ENCODE measurements at regions of chr3 and their contacts with region 1.

Region 1: DNA sequence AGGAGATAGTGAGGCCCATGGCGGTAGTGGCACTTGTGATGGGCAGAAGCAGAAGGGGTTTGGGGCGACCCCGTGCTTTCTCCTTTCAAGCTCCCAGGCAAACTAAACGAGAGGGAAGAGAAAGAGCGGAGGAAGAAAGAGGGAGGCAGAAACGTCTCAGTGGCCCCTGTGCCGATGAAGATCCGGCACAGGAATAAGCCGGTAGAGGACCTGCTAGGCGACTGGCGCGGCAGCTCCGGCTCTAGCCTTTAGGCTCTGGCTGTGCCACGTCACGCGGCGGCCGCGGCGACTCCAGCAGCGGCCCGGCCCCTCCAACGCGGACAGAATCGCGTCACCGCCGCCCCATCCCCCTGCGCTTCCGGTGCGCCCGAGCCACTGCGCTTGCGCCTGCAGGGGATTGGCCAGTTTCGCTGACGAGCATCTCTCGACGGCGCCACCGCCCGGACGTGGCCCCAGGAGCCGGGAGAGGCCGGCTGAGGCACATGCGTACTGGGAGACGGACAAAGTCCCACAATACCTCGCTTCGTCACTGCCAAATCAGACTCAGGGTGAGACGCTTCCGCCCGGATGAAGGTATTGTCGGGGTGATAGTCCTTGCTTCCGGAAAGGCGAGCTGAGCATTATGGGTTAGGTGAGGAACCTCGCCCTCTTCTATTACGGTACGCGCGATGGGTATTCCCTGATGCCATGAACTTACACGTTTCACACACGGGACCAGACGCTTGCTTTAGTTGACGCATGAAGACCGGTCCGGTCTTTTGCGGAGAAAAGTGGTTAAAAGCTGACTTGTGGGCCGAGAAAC is at the start of gene ARF4:
- DNase-seq: peak; percentile 100
- ATAC-seq: peak; percentile 88
- H3K4me3 ChIP-seq: peak within 1 kb of the TSS; percentile 67 to 99 (median 90)
- H3K4me3 Mint-ChIP-seq: peak within 1 kb of the TSS; percentile 96
- H3K27ac ChIP-seq: peak within 1 kb of the TSS; percentile 98
- H3K27ac Mint-ChIP-seq: peak within 1 kb of the TSS; percentile 97
- H3K4me1 ChIP-seq: peaks cover 29 to 34% of the 10 kb centered on the region in 2 donors
- H3K4me1 Mint-ChIP-seq: peaks cover 47% of the 10 kb centered on the region
- H3K27me3 ChIP-seq: no peaks in the 10 kb centered on the region
- H3K27me3 Mint-ChIP-seq: no peaks in the 10 kb centered on the region
- CTCF ChIP-seq: peak; percentile 17
- total RNA-seq, gene ARF4: 37.5 and 38.1 TPM in 2 replicates

Region 2: DNA sequence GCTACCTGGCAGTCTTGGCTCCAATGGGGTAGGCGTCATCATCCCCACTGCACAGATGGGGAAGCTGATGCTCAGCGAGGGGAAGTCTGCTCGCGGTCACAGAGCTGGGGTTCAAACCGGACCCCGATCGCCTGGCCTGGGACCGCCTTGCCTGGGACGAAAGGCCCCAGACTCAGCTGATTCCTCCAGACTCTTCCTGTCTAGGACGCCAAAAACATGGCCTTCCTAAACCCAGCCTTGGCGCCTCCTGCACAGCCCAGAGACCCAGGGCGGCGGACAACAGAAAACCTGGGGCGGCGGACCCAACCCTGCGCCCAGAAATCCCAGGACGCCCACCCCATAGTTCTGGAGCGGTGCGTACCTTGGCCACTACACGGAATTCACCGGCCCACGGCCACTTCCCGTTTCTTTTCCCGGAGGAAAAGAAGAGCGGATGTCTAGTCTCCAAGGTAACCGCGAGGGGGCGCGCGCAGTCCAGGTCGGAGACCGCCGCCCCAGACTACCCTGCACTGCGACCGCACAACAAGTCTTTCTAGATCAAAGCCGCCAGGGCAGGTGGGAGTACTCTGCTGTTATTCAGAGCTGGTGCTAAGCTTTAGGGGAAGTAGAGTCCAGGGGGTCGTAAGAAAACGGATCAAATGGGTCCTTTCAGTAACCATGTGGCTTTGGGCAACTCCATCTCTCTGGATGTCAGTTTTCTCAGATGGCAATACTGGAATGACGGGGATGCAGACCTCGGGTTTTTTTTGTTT is 427.3 kb before region 1 on chr3:
- CTCF ChIA-PET with region 1: no interaction called
- POLR2A ChIA-PET with region 1: no interaction called
- intact Hi-C with region 1: loop called (anchors 10 kb)
- DNase-seq: peak; percentile 86
- ATAC-seq: peak; percentile 67
- H3K4me3 ChIP-seq: peak overlapping the region; percentile 16 to 67 (median 51)
- H3K4me3 Mint-ChIP-seq: peak overlapping the region; percentile 46
- H3K27ac ChIP-seq: peak overlapping the region in 1 of 2 donors; percentile 5
- H3K27ac Mint-ChIP-seq: no peak overlapping the region
- H3K4me1 ChIP-seq: peaks cover 13 to 16% of the 10 kb centered on the region in 2 donors
- H3K4me1 Mint-ChIP-seq: peaks cover 11% of the 10 kb centered on the region
- H3K27me3 ChIP-seq: peaks cover 0 to 33% (median 17%) of the 10 kb centered on the region in 4 experiments
- H3K27me3 Mint-ChIP-seq: peaks cover 37% of the 10 kb centered on the region
- CTCF ChIP-seq: peak; percentile 96

Region 3: GRCh38 chr3:57234613-57235575 is 362.4 kb before region 1 on chr3:
- CTCF ChIA-PET with region 1: no interaction called
- POLR2A ChIA-PET with region 1: no interaction called
- intact Hi-C with region 1: loop called (anchors 1 kb)
- DNase-seq: peak; percentile 78
- ATAC-seq: peak; percentile 76
- H3K4me3 ChIP-seq: peak overlapping the region in 2 of 5 experiments; percentile 17 to 45
- H3K4me3 Mint-ChIP-seq: peak overlapping the region; percentile 73
- H3K27ac ChIP-seq: peak overlapping the region; percentile 76 to 92
- H3K27ac Mint-ChIP-seq: peak overlapping the region; percentile 88
- H3K4me1 ChIP-seq: peaks cover 26 to 30% of the 10 kb centered on the region in 2 donors
- H3K4me1 Mint-ChIP-seq: peaks cover 41% of the 10 kb centered on the region
- H3K27me3 ChIP-seq: no peaks in the 10 kb centered on the region
- H3K27me3 Mint-ChIP-seq: no peaks in the 10 kb centered on the region
- CTCF ChIP-seq: no peak

Region 4: DNA sequence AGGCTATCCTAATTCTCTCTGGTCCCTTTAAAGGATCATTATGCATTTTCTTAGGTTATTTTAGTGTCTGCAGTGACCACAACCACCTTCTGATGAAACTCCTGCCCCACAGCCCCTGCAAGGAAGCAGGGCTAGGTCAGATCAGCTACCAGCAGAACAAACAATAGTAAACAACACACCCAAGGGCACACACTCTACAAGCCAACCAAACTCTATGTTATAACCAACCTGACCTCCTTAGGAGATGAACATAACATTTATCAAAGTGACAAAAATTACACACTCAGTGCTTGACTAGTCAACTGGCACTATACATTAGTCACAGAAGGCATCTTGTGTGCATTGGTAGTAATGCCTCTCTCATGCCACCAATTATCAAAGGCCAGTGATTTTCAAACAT is 78.2 kb after region 1 on chr3:
- CTCF ChIA-PET with region 1: interaction called, 3 read pairs
- POLR2A ChIA-PET with region 1: no interaction called
- intact Hi-C with region 1: loop called (anchors 2 kb)
- DNase-seq: no peak
- ATAC-seq: no peak
- H3K4me3 ChIP-seq: no peak overlapping the region
- H3K4me3 Mint-ChIP-seq: peak overlapping the region; percentile 38
- H3K27ac ChIP-seq: peak overlapping the region in 1 of 2 donors; percentile 44
- H3K27ac Mint-ChIP-seq: peak overlapping the region; percentile 88
- H3K4me1 ChIP-seq: peaks cover 31 to 35% of the 10 kb centered on the region in 2 donors
- H3K4me1 Mint-ChIP-seq: peaks cover 56% of the 10 kb centered on the region
- H3K27me3 ChIP-seq: no peaks in the 10 kb centered on the region
- H3K27me3 Mint-ChIP-seq: no peaks in the 10 kb centered on the region
- CTCF ChIP-seq: no peak

Region 5: DNA sequence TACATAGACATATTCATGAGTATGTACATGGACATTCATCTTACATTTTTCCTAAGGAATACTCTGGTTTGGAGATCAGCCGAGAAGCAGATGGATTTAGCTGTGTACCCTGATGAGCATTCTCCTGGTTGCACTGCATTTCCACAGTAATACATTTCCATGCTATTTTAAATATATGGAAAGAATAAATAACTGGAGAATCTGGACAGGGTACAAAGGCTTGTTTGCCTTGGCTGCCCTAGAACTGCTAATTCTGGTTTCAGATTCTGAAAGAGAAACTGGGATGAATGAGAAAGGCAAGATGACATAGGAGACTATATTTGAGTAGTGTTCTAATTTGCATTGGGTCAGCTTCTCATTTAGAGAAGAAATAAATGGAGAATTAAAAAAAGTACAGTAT is 1260.1 kb after region 1 on chr3:
- CTCF ChIA-PET with region 1: no interaction called
- POLR2A ChIA-PET with region 1: no interaction called
- intact Hi-C with region 1: no loop called
- DNase-seq: no peak
- ATAC-seq: no peak
- H3K4me3 ChIP-seq: no peak overlapping the region
- H3K4me3 Mint-ChIP-seq: no peak overlapping the region
- H3K27ac ChIP-seq: no peak overlapping the region
- H3K27ac Mint-ChIP-seq: no peak overlapping the region
- H3K4me1 ChIP-seq: peaks cover 5 to 13% of the 10 kb centered on the region in 2 donors
- H3K4me1 Mint-ChIP-seq: peaks cover 22% of the 10 kb centered on the region
- H3K27me3 ChIP-seq: no peaks in the 10 kb centered on the region
- H3K27me3 Mint-ChIP-seq: no peaks in the 10 kb centered on the region
- CTCF ChIP-seq: no peak

Measured in B cell (primary cell).